ENCODE measurements at regions of chr20 and their contacts with region 1.

Region 1: GRCh38 chr20:32945710-32946221 is 58.5 kb downstream of the SUN5 start:
- DNase-seq: peak; percentile 52
- H3K4me3 ChIP-seq: no peak overlapping the region
- H3K27ac ChIP-seq: no peak overlapping the region
- H3K4me1 ChIP-seq: no peaks in the 10 kb centered on the region
- H3K27me3 ChIP-seq: peaks cover 36% of the 10 kb centered on the region
- CTCF ChIP-seq: peak; percentile 59

Region 2: DNA sequence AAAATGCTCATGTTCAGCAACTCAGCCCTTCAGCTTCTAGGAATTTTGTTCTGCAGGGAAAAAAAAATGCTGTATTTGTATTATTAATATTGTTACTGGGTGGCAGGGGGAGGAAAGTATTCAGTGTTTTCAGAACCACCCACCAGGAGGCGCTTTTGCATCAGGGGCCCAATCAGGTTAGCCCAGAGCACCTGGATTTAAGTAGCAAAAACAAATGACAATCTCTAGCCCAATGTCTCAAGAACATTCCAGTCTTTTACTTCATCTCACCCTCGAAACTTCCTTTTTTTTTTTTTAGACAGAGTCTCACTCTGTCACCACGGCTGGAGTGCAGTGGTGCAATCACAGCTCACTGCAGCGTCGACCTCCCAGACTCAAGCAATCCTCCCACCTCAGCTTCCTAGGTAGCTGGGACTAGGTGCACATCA is 271.4 kb before region 1 on chr20:
- CTCF ChIA-PET with region 1: no interaction called
- POLR2A ChIA-PET with region 1: no interaction called
- intact Hi-C with region 1: loop called (anchors 10 kb)
- DNase-seq: peak; percentile 27
- H3K4me3 ChIP-seq: no peak overlapping the region
- H3K27ac ChIP-seq: no peak overlapping the region
- H3K4me1 ChIP-seq: no peaks in the 10 kb centered on the region
- H3K27me3 ChIP-seq: no peaks in the 10 kb centered on the region
- CTCF ChIP-seq: peak; percentile 69

Region 3: DNA sequence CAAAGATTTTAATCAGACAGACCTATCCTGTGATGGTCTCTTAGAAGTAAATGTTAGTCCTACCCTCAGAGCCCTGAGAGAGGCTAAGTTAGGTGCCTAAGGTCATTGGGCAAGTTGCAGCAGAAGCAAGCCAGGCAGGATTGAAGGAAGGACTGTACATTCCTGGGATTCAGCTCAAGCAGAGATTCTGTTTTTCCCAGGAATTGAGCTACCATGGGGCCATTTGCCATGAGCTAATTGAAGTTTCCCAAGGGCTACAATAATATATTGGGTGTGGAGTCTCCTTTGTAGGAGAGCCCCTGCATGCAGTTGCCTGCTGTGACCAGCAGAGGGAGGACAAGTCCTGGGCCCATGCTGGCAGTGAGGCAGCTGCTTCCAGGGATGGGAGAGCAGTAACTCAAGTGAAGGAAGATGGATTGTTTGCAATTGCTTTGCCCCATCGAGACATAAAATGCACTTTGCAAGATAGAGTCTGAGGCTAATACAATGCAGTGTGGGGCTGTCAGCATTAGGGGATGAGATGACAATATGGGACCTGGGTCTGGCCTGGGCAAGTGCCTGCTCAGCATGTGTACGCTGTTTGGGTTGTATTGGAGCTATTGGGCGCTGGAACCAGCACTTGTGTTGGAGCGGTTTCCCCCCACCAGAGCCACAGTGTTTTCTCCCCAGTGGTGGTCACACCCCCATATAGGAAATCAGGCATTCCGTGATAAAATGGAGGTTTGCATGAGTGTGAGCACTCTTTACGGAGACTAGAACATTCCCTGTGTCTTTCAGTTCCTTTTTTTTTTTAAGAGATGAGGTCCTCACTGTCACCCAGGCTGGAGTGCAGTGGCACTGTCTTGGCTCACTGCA is 155.6 kb before region 1 on chr20:
- CTCF ChIA-PET with region 1: interaction called, 6 read pairs
- POLR2A ChIA-PET with region 1: no interaction called
- intact Hi-C with region 1: loop called (anchors 5 kb)
- DNase-seq: peak; percentile 75
- H3K4me3 ChIP-seq: no peak overlapping the region
- H3K27ac ChIP-seq: no peak overlapping the region
- H3K4me1 ChIP-seq: peaks cover 16% of the 10 kb centered on the region
- H3K27me3 ChIP-seq: no peaks in the 10 kb centered on the region
- CTCF ChIP-seq: peak; percentile 98

Region 4: GRCh38 chr20:33130568-33131061 is 184.8 kb after region 1 on chr20:
- CTCF ChIA-PET with region 1: no interaction called
- POLR2A ChIA-PET with region 1: no interaction called
- intact Hi-C with region 1: no loop called
- DNase-seq: no peak
- H3K4me3 ChIP-seq: no peak overlapping the region
- H3K27ac ChIP-seq: no peak overlapping the region
- H3K4me1 ChIP-seq: no peaks in the 10 kb centered on the region
- H3K27me3 ChIP-seq: peaks cover 28% of the 10 kb centered on the region
- CTCF ChIP-seq: no peak

Region 5: DNA sequence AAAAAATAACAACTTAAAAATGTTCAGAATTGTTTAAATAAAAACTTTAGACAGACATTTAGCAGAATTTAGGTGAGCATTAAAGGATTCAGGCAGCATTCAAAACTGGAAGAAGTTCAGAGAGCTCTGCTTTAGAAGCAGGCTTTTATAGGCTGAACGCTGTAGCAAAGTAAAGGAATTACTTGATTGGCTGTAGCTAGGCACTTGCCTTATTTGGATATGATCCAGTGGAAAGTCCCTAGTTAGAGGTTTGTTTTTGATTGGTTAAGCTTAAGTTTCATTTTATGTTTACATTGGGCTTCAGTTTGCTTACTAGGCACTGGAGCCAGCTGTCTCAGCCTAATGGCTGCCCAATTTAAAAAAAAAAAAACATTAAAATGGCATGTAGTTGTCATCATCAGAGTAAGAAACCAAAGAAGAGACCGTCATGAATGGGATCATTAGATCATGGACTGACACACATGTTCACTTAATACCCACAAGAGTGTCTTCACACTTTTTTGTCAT is 609.2 kb after region 1 on chr20:
- CTCF ChIA-PET with region 1: no interaction called
- POLR2A ChIA-PET with region 1: no interaction called
- intact Hi-C with region 1: no loop called
- DNase-seq: peak; percentile 86
- H3K4me3 ChIP-seq: no peak overlapping the region
- H3K27ac ChIP-seq: peak overlapping the region; percentile 51
- H3K4me1 ChIP-seq: peaks cover 26% of the 10 kb centered on the region
- H3K27me3 ChIP-seq: no peaks in the 10 kb centered on the region
- CTCF ChIP-seq: no peak